ENCODE measurements at regions of chrX and their contacts with region 1.

Region 1: DNA sequence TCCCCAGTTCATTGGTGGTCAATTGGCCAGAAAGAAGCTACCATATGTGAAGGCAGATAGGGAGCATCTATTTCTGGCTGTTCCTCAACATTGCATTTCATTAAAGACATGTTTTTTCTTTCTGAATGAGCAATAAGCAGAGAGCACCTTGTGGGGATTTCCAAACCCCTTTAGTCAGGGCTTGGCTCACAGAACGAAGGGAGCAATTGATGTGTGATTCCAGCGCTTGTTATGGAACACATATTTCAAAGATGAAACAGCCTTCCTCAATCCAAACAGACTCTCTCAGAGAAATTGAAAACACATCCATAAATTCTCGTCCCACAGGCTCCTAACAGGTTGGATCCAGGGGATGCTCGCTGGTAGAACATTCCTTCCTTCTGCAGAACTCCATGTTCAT is 84.1 kb downstream of the CLCN4 start:
- DNase-seq: no peak

Region 2: DNA sequence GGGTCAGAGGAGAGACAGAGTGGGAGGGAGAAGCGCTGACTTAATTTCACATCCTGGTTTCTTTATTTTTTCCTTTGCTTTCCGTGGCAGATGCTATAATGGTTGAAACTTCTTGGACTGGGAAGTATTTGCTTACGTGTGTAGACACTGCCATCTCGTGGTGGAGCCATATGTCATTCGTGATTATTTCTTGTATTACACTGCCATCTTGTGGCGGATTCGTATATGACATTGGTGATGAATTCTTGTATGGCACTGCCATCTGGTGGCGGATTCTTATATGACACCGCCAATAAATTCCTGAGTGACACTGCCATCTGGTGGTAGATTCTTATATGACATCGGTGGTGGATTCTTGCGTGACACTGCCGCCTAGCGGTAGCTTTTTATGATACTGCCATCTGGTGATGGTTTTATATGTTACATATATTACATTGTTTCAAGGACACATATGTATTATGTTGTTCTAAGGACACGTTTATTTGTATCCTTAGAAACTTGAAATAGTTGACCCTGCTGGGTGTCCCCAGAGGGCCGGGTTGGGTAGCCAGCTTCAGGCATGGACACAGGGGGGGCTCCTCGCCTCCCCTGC is 121.4 kb before region 1 on chrX:
- intact Hi-C with region 1: no loop called
- DNase-seq: peak; percentile 81

Region 3: DNA sequence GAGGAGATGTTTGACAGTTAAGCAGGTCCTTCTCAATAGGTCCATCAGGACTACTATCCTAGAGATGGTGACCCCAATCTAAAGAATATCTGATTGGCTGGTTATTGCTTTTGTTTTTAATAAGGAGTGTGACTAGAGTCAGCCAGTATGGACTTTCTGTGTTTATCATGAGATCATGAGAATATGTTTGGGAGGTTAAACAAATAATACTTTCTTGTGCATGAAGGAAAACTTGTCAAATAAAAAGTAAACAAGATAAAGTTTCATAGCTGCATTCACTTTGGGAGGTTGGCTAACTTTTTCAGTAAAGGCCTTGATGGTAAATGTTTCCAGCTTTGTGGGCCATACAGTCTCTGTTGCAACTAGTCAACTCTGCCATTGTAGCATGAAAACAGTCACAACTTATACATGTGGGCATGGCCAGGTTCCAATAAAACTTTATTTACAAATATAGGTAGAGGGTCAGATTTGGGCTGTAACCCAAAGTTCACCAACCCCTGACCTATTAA is 229.0 kb after region 1 on chrX:
- intact Hi-C with region 1: loop called (anchors 10 kb)
- DNase-seq: no peak

Region 4: DNA sequence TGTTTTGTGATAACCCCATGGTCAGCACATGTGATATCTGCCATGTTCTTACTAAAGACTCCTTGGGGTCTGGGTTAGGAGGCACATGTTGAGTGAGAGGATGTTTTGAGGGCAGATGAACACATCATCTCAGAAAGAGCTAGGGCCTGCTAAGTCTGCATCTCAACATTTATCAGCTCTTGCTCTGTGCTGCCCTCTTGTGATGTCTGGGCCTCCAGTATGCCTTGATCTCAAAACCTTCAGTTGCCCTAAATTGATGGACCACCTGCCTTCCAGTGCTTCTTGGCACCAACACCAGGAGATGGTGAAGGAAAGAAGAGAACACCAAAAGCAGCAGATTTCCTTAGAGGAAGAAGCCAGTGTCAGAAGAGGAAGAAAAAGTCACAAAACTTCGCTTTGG is 357.0 kb after region 1 on chrX:
- intact Hi-C with region 1: no loop called
- DNase-seq: no peak

Measured in cardiac septum (tissue), 1 donor.